PC-3 (cell line): ENCODE measurements at regions of chr7 and their contacts with region 1.

Region 1: GRCh38 chr7:124152859-124153692 is 120.2 kb upstream of the TMEM229A start:
- DNase-seq: peak; percentile 67
- ATAC-seq: peak; percentile 86
- H3K4me3 ChIP-seq: no peak overlapping the region
- H3K27ac ChIP-seq: no peak overlapping the region
- H3K4me1 ChIP-seq: peaks cover 4% of the 10 kb centered on the region; the same call in 1 of the 2 replicates
- H3K27me3 ChIP-seq: no peaks in the 10 kb centered on the region
- CTCF ChIP-seq: peak; percentile 64

Region 2: GRCh38 chr7:123748734-123749536 is 404.1 kb before region 1 on chr7 and contains the start of gene WASL:
- CTCF ChIA-PET with region 1: no interaction called
- POLR2A ChIA-PET with region 1: no interaction called
- intact Hi-C with region 1: no loop called
- DNase-seq: peak; percentile 89
- ATAC-seq: peak; percentile 77
- H3K4me3 ChIP-seq: peak within 1 kb of the TSS; percentile 98
- H3K27ac ChIP-seq: peak within 1 kb of the TSS; percentile 87
- H3K4me1 ChIP-seq: peaks cover 29% of the 10 kb centered on the region
- H3K27me3 ChIP-seq: no peaks in the 10 kb centered on the region
- CTCF ChIP-seq: no peak
- total RNA-seq, gene WASL: 8.5 and 10.9 TPM in 2 replicates

Region 3: DNA sequence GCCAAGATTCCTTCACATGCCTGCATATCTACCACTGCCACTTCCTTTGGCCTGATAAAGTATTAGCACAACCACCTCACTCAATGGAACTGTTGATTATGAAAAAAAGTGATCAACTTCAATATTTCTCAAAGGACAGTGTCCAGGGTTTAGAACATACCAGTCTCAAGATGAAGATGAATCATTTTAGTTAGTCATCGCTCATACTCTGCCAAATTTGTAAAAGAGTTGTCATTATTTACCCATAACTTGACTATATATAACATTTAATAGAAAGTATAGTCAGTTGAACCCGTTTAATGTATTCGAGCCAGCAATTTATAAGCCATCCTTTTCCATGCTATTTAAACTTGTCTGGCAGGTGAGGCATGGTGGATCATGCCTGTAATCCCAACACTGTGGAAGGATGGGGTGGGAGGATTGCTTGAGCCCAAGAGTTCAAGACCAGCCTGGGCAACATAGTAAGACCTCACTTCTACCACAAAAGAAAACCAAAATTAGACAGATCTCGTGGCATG is 194.8 kb before region 1 on chr7:
- CTCF ChIA-PET with region 1: no interaction called
- POLR2A ChIA-PET with region 1: no interaction called
- intact Hi-C with region 1: loop called (anchors 5 kb)
- DNase-seq: peak; percentile 92
- ATAC-seq: peak; percentile 98
- H3K4me3 ChIP-seq: no peak overlapping the region
- H3K27ac ChIP-seq: peak overlapping the region; percentile 40; the same call in 1 of the 2 replicates
- H3K4me1 ChIP-seq: peaks cover 7% of the 10 kb centered on the region; the same call in 1 of the 2 replicates
- H3K27me3 ChIP-seq: no peaks in the 10 kb centered on the region
- CTCF ChIP-seq: no peak

Region 4: GRCh38 chr7:124101173-124101768 is 51.8 kb before region 1 on chr7:
- CTCF ChIA-PET with region 1: interaction called, 4 read pairs
- POLR2A ChIA-PET with region 1: no interaction called
- intact Hi-C with region 1: loop called (anchors 2 kb)
- DNase-seq: peak; percentile 52
- ATAC-seq: peak; percentile 31; the same call in 1 of the 2 replicates
- H3K4me3 ChIP-seq: no peak overlapping the region
- H3K27ac ChIP-seq: no peak overlapping the region
- H3K4me1 ChIP-seq: no peaks in the 10 kb centered on the region
- H3K27me3 ChIP-seq: no peaks in the 10 kb centered on the region
- CTCF ChIP-seq: peak; percentile 79

Region 5: DNA sequence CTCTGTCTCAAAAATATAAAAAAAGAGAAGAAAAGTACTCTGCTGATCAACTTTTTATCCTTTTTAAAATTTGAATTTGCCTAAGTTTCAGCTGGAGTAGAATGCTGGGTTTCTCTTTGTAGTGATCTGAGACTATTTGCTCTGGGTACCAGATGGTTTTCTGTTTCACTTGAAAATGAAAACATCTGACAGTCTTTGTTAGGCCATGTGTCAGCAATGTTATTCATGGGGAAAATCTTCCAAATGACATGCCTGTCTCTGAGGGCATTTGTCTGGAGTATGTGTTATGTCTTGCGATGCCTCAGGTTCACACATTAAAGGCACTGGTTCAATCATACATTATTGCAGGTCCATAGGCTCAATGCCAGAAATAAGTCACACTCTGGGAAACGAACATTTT is 55.1 kb after region 1 on chr7:
- CTCF ChIA-PET with region 1: no interaction called
- POLR2A ChIA-PET with region 1: no interaction called
- intact Hi-C with region 1: no loop called
- DNase-seq: no peak
- ATAC-seq: no peak
- H3K4me3 ChIP-seq: no peak overlapping the region
- H3K27ac ChIP-seq: no peak overlapping the region
- H3K4me1 ChIP-seq: no peaks in the 10 kb centered on the region
- H3K27me3 ChIP-seq: no peaks in the 10 kb centered on the region
- CTCF ChIP-seq: no peak

Region 6: GRCh38 chr7:124308384-124308783 is 155.3 kb after region 1 on chr7:
- CTCF ChIA-PET with region 1: no interaction called
- POLR2A ChIA-PET with region 1: no interaction called
- intact Hi-C with region 1: no loop called
- DNase-seq: no peak
- ATAC-seq: no peak
- H3K4me3 ChIP-seq: no peak overlapping the region
- H3K27ac ChIP-seq: no peak overlapping the region
- H3K4me1 ChIP-seq: no peaks in the 10 kb centered on the region
- H3K27me3 ChIP-seq: no peaks in the 10 kb centered on the region
- CTCF ChIP-seq: no peak

Region 7: GRCh38 chr7:124784879-124785818 is 632.1 kb after region 1 on chr7:
- CTCF ChIA-PET with region 1: interaction called, 3 read pairs
- POLR2A ChIA-PET with region 1: no interaction called
- intact Hi-C with region 1: loop called (anchors 1 kb)
- DNase-seq: peak; percentile 66
- ATAC-seq: peak; percentile 38
- H3K4me3 ChIP-seq: no peak overlapping the region
- H3K27ac ChIP-seq: no peak overlapping the region
- H3K4me1 ChIP-seq: peaks cover 8% of the 10 kb centered on the region; the same call in 1 of the 2 replicates
- H3K27me3 ChIP-seq: no peaks in the 10 kb centered on the region
- CTCF ChIP-seq: peak; percentile 92

Region 8: GRCh38 chr7:124840435-124840834 is 687.4 kb after region 1 on chr7:
- CTCF ChIA-PET with region 1: interaction called, 3 read pairs
- POLR2A ChIA-PET with region 1: no interaction called
- intact Hi-C with region 1: loop called (anchors 1 kb)
- DNase-seq: peak; percentile 47
- ATAC-seq: peak; percentile 54
- H3K4me3 ChIP-seq: no peak overlapping the region
- H3K27ac ChIP-seq: no peak overlapping the region
- H3K4me1 ChIP-seq: no peaks in the 10 kb centered on the region
- H3K27me3 ChIP-seq: no peaks in the 10 kb centered on the region
- CTCF ChIP-seq: peak; percentile 72

Region 9: DNA sequence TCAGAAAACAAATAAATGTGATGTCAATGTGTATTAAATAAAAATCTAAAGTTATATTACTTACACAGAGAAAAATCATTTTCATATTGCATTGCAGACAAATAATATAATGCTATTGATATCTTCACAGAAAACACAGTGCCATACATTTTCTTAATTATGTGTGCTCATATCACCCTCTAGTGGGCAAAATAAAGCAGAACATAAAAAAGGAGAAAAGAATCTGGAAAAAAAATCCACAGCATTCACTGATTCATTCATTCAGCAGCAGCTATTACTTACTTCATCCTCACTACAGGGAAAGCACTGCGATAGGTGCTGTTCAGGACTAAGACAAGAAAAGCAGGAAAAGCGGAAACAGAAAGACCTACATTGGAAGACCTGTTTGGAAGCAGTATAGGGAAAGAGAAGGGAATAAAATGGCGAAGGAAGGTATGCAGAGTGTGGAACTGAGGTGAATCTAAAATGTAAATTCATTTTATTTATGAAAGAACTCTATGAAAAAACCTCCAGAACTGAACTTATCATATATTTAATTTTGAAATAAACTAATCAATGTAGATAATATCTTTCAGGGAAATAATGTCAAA is 703.3 kb after region 1 on chr7:
- CTCF ChIA-PET with region 1: no interaction called
- POLR2A ChIA-PET with region 1: no interaction called
- intact Hi-C with region 1: loop called (anchors 1 kb)
- DNase-seq: peak; percentile 67
- ATAC-seq: peak; percentile 51
- H3K4me3 ChIP-seq: no peak overlapping the region
- H3K27ac ChIP-seq: no peak overlapping the region
- H3K4me1 ChIP-seq: no peaks in the 10 kb centered on the region
- H3K27me3 ChIP-seq: no peaks in the 10 kb centered on the region
- CTCF ChIP-seq: peak; percentile 81